ENCODE measurements at regions of chr12 and their contacts with region 1.

Region 1: GRCh38 chr12:34625116-34625515 is 602.8 kb downstream of the ALG10 start:
- H3K4me3 Mint-ChIP-seq: no peak overlapping the region
- H3K27ac Mint-ChIP-seq: no peak overlapping the region
- H3K4me1 Mint-ChIP-seq: no peaks in the 10 kb centered on the region
- H3K27me3 Mint-ChIP-seq: no peaks in the 10 kb centered on the region

Region 2: GRCh38 chr12:34033628-34034282 is 591.4 kb before region 1 on chr12:
- intact Hi-C with region 1: loop called (anchors 10 kb)
- H3K4me3 Mint-ChIP-seq: no peak overlapping the region
- H3K27ac Mint-ChIP-seq: no peak overlapping the region
- H3K4me1 Mint-ChIP-seq: peaks cover 21% of the 10 kb centered on the region
- H3K27me3 Mint-ChIP-seq: no peaks in the 10 kb centered on the region

Measured in dendritic cell treated with granulocyte-macrophage colony-stimulating factor and Interleukin-4, amounts not matched to agents 40 ng/mL and 50 ng/mL, for 4 days (primary cell).